Stomach (tissue), 19 donors: ENCODE measurements at regions of chr13 and their contacts with region 1.

Region 1: GRCh38 chr13:75870397-75870903 is 234.3 kb downstream of the LMO7 start:
- DNase-seq: peak in 1 of 2 donors; percentile 55
- H3K4me3 ChIP-seq: peak overlapping the region; percentile 25 to 34 (median 34)
- H3K27ac ChIP-seq: peak overlapping the region in 2 of 5 donors; percentile 47 to 49
- H3K4me1 ChIP-seq: peaks cover 0 to 6% (median 0%) of the 10 kb centered on the region in 4 donors
- H3K27me3 ChIP-seq: no peaks in the 10 kb centered on the region
- CTCF ChIP-seq: peak in 4 of 7 experiments; percentile 47 to 64 (median 60)
- EP300 ChIP-seq: no peak
- POLR2A ChIP-seq: no peak

Region 2: DNA sequence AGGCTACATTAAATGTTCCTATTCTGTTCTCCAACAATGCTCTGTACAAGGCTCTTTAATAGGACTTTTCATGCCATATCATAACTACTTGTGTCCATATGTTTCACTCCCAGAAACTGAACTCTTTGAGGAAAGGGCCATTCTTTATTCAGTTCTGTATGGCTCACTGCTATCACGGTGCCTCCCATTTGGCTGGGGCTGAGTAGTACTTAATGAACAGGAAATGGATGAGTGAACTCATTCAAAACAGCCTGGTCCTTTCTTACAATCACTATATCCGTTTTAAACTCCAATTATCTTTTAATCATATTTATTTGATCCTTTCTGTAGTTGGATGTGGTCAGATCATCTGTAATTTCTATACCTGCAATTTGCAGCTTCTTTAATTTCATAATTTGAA is 799.1 kb before region 1 on chr13:
- intact Hi-C with region 1: no loop called
- DNase-seq: peak in 1 of 2 donors; percentile 10
- H3K4me3 ChIP-seq: no peak overlapping the region
- H3K27ac ChIP-seq: no peak overlapping the region
- H3K4me1 ChIP-seq: no peaks in the 10 kb centered on the region
- H3K27me3 ChIP-seq: no peaks in the 10 kb centered on the region
- CTCF ChIP-seq: no peak
- EP300 ChIP-seq: no peak
- POLR2A ChIP-seq: no peak

Region 3: DNA sequence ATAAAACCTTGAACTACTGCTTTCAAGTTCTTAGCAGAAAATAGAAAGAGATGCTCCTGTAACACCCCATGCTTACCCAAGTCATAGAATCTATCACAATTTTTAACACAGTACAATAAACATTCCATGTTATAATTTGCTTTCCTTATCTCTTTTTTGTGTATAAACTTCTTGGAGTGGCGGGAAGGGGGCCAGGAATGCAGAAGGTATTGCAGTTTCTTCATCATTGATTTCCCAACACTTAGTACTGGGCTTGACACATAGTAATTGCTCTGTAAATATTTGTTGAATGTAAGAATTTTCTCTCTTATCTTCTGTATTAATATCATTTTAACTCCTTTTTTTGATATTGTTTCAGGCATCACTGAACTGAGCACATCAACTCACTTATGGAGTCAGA is 479.9 kb after region 1 on chr13:
- intact Hi-C with region 1: no loop called
- DNase-seq: peak in 1 of 2 donors; percentile 52
- H3K4me3 ChIP-seq: no peak overlapping the region
- H3K27ac ChIP-seq: no peak overlapping the region
- H3K4me1 ChIP-seq: peaks cover 0 to 4% (median 0%) of the 10 kb centered on the region in 4 donors
- H3K27me3 ChIP-seq: no peaks in the 10 kb centered on the region
- CTCF ChIP-seq: no peak
- EP300 ChIP-seq: no peak
- POLR2A ChIP-seq: no peak

Region 4: GRCh38 chr13:76903544-76904162 is 1033.2 kb after region 1 on chr13:
- intact Hi-C with region 1: loop called (anchors 5 kb)
- DNase-seq: peak; percentile 69 to 90
- H3K4me3 ChIP-seq: no peak overlapping the region
- H3K27ac ChIP-seq: no peak overlapping the region
- H3K4me1 ChIP-seq: peaks cover 0 to 7% (median 0%) of the 10 kb centered on the region in 4 donors
- H3K27me3 ChIP-seq: no peaks in the 10 kb centered on the region
- CTCF ChIP-seq: peak in 5 of 7 experiments; percentile 90 to 98 (median 97)
- EP300 ChIP-seq: no peak
- POLR2A ChIP-seq: no peak